ENCODE measurements at regions of chr15 and their contacts with region 1.

Region 1: GRCh38 chr15:79896637-79897379 is at the start of gene MTHFS:
- DNase-seq: peak; percentile 61 to 91 (median 79)
- ATAC-seq: peak; percentile 84
- H3K4me3 ChIP-seq: peak within 1 kb of the TSS; percentile 75 to 96
- H3K4me3 Mint-ChIP-seq: peak within 1 kb of the TSS; percentile 96
- H3K27ac ChIP-seq: peak within 1 kb of the TSS; percentile 94 to 95
- H3K27ac Mint-ChIP-seq: peak within 1 kb of the TSS; percentile 100
- H3K4me1 ChIP-seq: peaks cover 28% of the 10 kb centered on the region
- H3K4me1 Mint-ChIP-seq: peaks cover 40% of the 10 kb centered on the region
- H3K27me3 ChIP-seq: no peaks in the 10 kb centered on the region
- H3K27me3 Mint-ChIP-seq: no peaks in the 10 kb centered on the region
- CTCF ChIP-seq: peak; percentile 36
- total RNA-seq, gene MTHFS: 5.1 to 7.8 TPM

Region 2: DNA sequence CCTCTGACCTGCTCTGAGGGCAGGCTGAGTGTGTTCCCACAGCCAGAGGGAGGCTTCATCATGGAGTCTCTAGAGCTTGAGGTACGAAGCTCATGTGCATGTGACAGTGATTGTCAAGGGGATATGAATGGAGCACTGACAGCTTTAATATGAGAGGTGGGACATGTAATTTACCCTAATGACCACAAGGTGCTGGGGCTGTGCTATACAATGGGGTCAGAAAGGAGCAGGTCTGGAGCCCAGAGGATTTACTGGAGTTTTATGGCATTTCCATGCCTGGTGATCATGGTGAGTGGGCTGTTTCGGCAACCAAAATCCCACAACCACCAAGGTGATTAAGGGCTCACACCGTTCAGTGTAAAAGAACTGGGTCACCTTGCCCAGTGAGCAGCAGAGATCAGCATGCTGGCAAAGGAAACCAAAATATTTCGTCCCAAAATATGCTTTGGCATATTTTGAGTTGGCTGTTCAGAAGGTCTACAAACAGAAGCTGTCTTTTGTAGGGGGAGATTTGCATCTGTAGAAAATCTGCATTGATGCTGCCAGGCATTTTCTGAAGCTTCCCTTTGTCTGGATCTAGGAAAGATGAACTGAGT is 766.2 kb before region 1 on chr15:
- CTCF ChIA-PET with region 1: no interaction called
- POLR2A ChIA-PET with region 1: no interaction called
- intact Hi-C with region 1: no loop called
- DNase-seq: no peak
- ATAC-seq: no peak
- H3K4me3 ChIP-seq: no peak overlapping the region
- H3K4me3 Mint-ChIP-seq: no peak overlapping the region
- H3K27ac ChIP-seq: no peak overlapping the region
- H3K27ac Mint-ChIP-seq: no peak overlapping the region
- H3K4me1 ChIP-seq: no peaks in the 10 kb centered on the region
- H3K4me1 Mint-ChIP-seq: no peaks in the 10 kb centered on the region
- H3K27me3 ChIP-seq: no peaks in the 10 kb centered on the region
- H3K27me3 Mint-ChIP-seq: peaks cover 27% of the 10 kb centered on the region
- CTCF ChIP-seq: no peak

Region 3: DNA sequence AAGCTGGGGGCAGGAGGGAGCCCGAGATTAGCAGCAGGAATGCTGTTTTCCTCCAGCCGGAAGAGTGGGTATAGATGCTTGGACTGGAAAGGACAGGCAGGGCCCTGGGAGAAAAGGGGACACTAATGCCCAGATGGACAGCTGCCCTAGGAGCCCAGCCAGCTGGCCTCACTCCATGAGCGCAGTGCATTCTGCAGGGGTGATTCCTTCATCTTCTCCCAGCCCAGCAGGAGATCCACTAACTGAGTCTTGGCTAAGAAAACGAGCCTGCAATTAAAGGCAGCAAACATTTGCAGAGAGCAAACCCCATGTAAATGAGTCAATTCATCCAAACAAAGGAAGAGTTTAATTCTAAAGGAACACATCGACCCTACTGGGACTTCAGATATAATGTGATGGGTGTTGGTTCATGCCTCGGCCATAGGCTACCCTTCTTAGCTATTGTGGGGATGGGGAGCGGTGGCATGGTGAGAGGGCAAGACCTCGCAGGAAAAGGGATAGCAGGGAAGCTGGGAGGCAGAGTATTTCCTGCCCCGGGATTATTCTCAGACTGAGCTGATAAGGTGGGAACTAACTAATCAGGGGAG is 478.0 kb before region 1 on chr15:
- CTCF ChIA-PET with region 1: no interaction called
- POLR2A ChIA-PET with region 1: no interaction called
- intact Hi-C with region 1: no loop called
- DNase-seq: no peak
- ATAC-seq: no peak
- H3K4me3 ChIP-seq: no peak overlapping the region
- H3K4me3 Mint-ChIP-seq: no peak overlapping the region
- H3K27ac ChIP-seq: no peak overlapping the region
- H3K27ac Mint-ChIP-seq: no peak overlapping the region
- H3K4me1 ChIP-seq: no peaks in the 10 kb centered on the region
- H3K4me1 Mint-ChIP-seq: no peaks in the 10 kb centered on the region
- H3K27me3 ChIP-seq: no peaks in the 10 kb centered on the region
- H3K27me3 Mint-ChIP-seq: no peaks in the 10 kb centered on the region
- CTCF ChIP-seq: no peak

Region 4: DNA sequence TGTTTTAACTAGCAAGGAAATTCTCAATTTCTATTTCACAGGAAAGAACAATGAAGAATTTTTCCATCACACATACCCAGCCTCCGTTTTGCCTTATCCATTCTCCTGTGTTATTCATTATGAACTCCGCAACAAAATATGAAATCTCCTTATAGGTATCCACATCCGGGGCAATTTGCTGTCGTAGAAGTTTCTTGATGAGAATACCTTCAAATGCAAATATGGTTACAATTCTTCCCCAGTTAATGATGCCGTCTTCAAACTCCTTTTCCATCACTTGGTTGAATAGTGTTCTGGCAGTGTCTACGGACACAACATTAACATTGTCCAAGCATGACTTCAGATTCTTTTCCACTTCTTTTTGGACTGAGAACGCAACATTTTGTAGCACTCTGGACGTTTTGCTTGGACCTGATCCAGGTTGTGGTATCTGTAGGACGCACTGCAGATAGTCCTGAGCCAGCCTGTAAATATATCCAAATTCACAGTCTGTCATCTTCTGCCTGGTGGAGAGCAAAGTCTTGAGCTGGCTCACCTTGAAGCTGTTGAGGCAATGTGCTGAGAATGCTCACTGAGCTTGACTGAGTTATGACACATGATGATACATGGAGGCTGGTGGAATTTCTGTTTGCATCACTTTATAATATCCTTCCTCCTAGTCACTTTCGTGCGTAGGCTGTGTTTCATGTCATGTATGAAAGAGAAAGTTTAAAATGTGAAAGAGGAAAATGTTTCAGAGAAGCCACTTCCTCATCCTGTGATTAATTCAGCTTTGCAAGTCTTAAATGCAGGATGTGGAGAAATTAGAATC is 74.0 kb after region 1 on chr15 and contains the start of gene BCL2A1:
- CTCF ChIA-PET with region 1: interaction called, 4 read pairs
- POLR2A ChIA-PET with region 1: interaction called, 28 read pairs
- intact Hi-C with region 1: loop called (anchors 1 to 2 kb)
- DNase-seq: peak in 8 of 9 experiments; percentile 7 to 86 (median 55)
- ATAC-seq: peak; percentile 85
- H3K4me3 ChIP-seq: peak within 1 kb of the TSS; percentile 59 to 68
- H3K4me3 Mint-ChIP-seq: peak within 1 kb of the TSS; percentile 92
- H3K27ac ChIP-seq: peak within 1 kb of the TSS; percentile 73 to 76
- H3K27ac Mint-ChIP-seq: peak within 1 kb of the TSS; percentile 96
- H3K4me1 ChIP-seq: peaks cover 40% of the 10 kb centered on the region
- H3K4me1 Mint-ChIP-seq: peaks cover 57% of the 10 kb centered on the region
- H3K27me3 ChIP-seq: no peaks in the 10 kb centered on the region
- H3K27me3 Mint-ChIP-seq: no peaks in the 10 kb centered on the region
- CTCF ChIP-seq: no peak
- total RNA-seq, gene BCL2A1: 24.5 to 27.1 TPM

Region 5: GRCh38 chr15:80173022-80173759 is 276.4 kb after region 1 on chr15:
- CTCF ChIA-PET with region 1: no interaction called
- POLR2A ChIA-PET with region 1: no interaction called
- intact Hi-C with region 1: loop called in 1 of 2 experiments (anchors 2 kb)
- DNase-seq: peak; percentile 52 to 81 (median 69)
- ATAC-seq: peak; percentile 77
- H3K4me3 ChIP-seq: no peak overlapping the region
- H3K4me3 Mint-ChIP-seq: no peak overlapping the region
- H3K27ac ChIP-seq: no peak overlapping the region
- H3K27ac Mint-ChIP-seq: no peak overlapping the region
- H3K4me1 ChIP-seq: no peaks in the 10 kb centered on the region
- H3K4me1 Mint-ChIP-seq: no peaks in the 10 kb centered on the region
- H3K27me3 ChIP-seq: no peaks in the 10 kb centered on the region
- H3K27me3 Mint-ChIP-seq: no peaks in the 10 kb centered on the region
- CTCF ChIP-seq: peak; percentile 76

Measured in CD8-positive, alpha-beta T cell (primary cell).